Endothelial cell of umbilical vein (primary cell): ENCODE measurements at regions of chr17 and their contacts with region 1.

Region 1: GRCh38 chr17:77957857-77958715 is at the start of gene TNRC6C:
- DNase-seq: peak; percentile 98
- H3K4me3 ChIP-seq: peak within 1 kb of the TSS; percentile 65 to 81 (median 67)
- H3K27ac ChIP-seq: peak within 1 kb of the TSS; percentile 21
- H3K4me1 ChIP-seq: peaks cover 20% of the 10 kb centered on the region
- H3K27me3 ChIP-seq: peaks cover 26 to 29% of the 10 kb centered on the region in 2 experiments
- CTCF ChIP-seq: peak in 1 of 2 donors; percentile 33
- POLR2A ChIP-seq: peak; percentile 99
- total RNA-seq, gene TNRC6C: 17.5 and 20.4 TPM in 2 replicates

Region 2: GRCh38 chr17:77420804-77421629 is 537.1 kb before region 1 on chr17:
- CTCF ChIA-PET with region 1: no interaction called
- POLR2A ChIA-PET with region 1: no interaction called
- dilution Hi-C with region 1: no loop called
- intact Hi-C with region 1: no loop called
- DNase-seq: peak; percentile 42
- H3K4me3 ChIP-seq: no peak overlapping the region
- H3K27ac ChIP-seq: no peak overlapping the region
- H3K4me1 ChIP-seq: peaks cover 35% of the 10 kb centered on the region
- H3K27me3 ChIP-seq: no peaks in the 10 kb centered on the region
- CTCF ChIP-seq: no peak
- POLR2A ChIP-seq: no peak

Region 3: DNA sequence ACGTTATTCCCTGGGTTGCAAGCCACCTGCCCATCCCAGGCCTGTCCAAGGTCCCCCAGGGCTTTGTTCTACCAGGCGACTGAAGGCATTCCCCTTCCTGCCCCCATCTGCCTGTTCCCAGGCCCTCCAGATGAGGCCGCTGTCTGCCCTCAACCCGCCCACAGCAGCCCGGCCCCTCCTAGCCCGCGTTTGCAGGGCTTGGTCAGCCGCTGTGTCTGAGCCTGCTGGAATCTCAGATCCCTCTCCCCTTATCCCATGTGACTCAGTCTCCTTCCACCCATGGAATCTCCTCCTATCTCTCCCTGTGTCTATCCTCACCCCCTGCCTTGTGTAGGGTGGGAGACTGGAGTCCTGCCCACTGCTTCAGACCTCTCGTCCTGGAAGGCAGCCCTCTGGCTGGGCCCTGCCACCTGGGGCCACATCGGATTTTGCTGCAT is 185.6 kb before region 1 on chr17:
- CTCF ChIA-PET with region 1: no interaction called
- POLR2A ChIA-PET with region 1: no interaction called
- dilution Hi-C with region 1: no loop called
- intact Hi-C with region 1: loop called (anchors 5 kb)
- DNase-seq: peak; percentile 40
- H3K4me3 ChIP-seq: no peak overlapping the region
- H3K27ac ChIP-seq: no peak overlapping the region
- H3K4me1 ChIP-seq: no peaks in the 10 kb centered on the region
- H3K27me3 ChIP-seq: no peaks in the 10 kb centered on the region
- CTCF ChIP-seq: peak; percentile 54 to 86
- POLR2A ChIP-seq: no peak

Region 4: DNA sequence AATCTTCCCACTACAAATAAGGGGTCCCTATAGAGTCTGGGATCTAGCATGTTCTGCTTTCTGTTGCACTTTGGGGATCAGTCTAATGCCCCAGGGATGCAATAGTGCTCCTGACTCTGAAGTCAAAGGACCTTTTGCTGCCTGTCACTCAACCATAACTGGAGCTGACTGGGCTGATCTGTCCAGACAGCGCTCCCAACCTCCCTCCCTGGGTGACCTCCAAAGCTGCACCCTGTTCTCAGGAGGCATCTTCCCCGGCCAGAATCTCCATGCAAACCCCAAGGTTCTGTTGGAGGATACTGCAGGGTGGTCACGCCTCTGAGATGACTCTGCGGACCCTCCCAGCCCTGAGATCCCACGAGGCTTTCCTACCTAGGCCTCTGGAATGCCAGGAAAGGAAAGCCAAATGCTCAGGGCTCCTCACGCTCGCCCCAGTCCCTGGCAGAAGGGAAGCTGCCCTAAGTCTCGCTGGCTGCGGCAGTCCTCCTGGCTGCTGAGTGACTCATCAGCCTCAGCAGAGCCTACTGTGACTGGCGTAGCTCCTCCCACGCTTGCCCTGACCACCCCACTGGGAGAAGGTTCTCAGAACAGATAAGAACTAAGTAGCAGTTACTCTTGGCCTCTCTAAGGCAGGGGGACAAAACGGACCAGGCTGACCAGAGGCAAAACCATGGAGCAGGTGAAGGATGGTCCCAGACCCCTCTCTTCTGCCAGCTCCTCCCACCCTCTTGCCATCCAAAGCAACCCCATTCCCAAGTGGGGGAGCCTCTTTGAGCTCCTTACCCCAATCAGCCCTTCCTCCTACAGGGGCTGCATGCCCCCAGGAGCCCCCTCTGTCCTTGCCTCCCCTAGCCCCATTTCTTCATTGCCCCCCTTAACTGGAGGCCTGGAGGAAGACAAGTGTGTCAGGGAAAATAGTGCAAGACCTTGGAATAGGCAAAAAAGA is 123.6 kb before region 1 on chr17:
- CTCF ChIA-PET with region 1: interaction called, 3 read pairs
- POLR2A ChIA-PET with region 1: interaction called, 8 read pairs
- dilution Hi-C with region 1: no loop called
- intact Hi-C with region 1: loop called (anchors 2 kb)
- DNase-seq: peak; percentile 75
- H3K4me3 ChIP-seq: no peak overlapping the region
- H3K27ac ChIP-seq: no peak overlapping the region
- H3K4me1 ChIP-seq: peaks cover 31% of the 10 kb centered on the region
- H3K27me3 ChIP-seq: no peaks in the 10 kb centered on the region
- CTCF ChIP-seq: no peak
- POLR2A ChIP-seq: no peak

Region 5: DNA sequence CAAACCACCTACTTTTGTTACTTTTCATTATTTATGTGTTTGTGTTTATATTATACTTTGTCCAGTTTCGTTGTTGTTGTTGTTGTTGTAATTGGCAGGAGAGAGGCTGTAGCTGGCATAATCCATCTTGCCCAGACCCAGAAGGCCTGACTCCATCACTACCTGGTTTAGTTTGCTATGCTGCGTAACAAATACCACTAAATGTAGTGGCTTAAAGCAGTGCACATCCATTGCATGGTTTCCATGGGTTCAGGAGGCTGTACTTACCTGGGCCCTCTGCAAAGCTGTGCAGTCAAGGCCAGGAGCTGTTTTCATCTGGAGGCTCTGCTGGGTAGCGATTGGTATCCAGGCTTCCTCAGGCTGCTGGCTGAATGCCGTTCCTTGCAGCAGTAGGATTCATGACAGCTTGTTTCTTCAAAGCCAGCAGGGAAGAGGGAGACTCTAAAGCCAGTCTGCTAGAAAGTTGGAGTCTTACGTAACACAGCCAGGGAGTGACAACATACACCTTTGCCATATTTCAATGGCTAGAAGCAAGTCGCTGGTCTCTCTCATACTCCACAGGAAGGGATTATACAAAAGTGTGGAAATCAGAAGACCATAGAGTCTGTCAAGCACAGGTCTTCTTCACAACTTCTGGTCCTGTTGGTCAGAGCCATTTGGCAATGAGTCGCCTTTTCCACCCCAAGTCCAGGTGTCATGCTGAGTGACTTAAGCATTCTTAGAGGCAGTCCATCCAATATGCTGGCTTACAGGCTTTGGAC is 41.5 kb after region 1 on chr17:
- CTCF ChIA-PET with region 1: interaction called, 4 read pairs
- POLR2A ChIA-PET with region 1: interaction called, 25 read pairs
- dilution Hi-C with region 1: no loop called
- intact Hi-C with region 1: loop called (anchors 1 kb)
- DNase-seq: peak; percentile 66
- H3K4me3 ChIP-seq: no peak overlapping the region
- H3K27ac ChIP-seq: peak overlapping the region; percentile 79
- H3K4me1 ChIP-seq: peaks cover 39% of the 10 kb centered on the region
- H3K27me3 ChIP-seq: no peaks in the 10 kb centered on the region
- CTCF ChIP-seq: no peak
- POLR2A ChIP-seq: no peak

Region 6: DNA sequence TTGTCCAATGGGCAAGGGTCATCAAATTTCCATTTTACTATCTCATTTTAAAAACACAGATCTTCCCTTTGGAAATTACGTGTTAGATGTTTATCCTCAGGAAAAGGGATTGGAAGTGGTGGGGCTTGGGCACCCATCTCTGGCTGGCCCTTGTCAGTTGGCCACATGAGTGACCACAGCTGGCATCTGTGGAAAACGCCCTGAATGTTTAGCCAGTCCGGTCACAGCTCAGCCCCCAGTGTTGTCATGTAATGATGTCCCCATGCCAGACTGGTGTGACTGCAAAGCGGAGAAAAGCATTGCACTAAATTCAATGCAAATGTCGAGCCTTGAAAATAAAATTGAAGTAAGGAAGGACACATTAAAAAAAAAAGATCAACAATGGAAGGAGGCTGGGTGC is 117.5 kb after region 1 on chr17:
- CTCF ChIA-PET with region 1: no interaction called
- POLR2A ChIA-PET with region 1: no interaction called
- dilution Hi-C with region 1: no loop called
- intact Hi-C with region 1: no loop called
- DNase-seq: no peak
- H3K4me3 ChIP-seq: no peak overlapping the region
- H3K27ac ChIP-seq: no peak overlapping the region
- H3K4me1 ChIP-seq: no peaks in the 10 kb centered on the region
- H3K27me3 ChIP-seq: no peaks in the 10 kb centered on the region
- CTCF ChIP-seq: no peak
- POLR2A ChIP-seq: no peak

Region 7: DNA sequence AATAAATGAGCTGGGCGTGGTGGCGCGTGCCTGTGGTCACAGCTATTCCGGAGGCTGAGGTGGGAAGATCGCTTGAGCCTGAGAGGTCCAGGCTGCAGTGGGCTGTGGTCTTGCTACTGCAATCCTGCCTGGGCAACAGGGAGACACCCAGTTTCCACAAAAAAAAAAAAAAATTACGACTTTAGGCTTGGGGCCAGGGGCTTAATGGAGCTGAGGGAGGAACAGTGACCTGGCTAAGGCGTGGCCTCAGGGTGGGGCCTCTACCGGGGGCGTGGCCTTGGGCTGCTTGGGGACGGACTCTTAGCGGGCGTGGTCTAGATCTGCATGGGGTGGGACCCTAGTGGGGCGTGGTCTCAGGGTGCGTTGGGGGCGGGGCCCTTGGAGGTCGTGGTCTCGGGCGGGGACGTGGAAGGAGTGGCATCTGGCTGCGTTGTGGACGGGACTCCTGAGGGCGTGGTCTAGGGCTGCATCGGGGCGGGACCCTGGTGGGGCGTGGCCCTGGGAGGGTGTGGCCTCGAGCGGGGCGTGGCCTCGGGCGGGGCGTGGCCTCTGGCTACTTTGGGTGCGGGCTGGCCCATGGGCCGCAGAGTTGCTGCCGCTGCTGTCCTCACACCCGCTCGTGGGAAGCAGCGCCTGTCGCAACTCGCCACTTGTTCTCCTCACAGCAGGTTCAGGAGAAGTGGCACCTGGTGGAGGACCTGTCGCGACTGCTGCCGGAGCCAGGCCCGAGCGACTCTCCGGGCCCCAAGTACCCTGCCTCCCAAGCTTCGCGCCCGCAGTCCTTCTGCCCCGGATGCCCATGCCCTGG is 182.3 kb after region 1 on chr17:
- CTCF ChIA-PET with region 1: no interaction called
- POLR2A ChIA-PET with region 1: no interaction called
- dilution Hi-C with region 1: no loop called
- intact Hi-C with region 1: no loop called
- DNase-seq: peak; percentile 84
- H3K4me3 ChIP-seq: peak overlapping the region in 1 of 3 experiments; percentile 1
- H3K27ac ChIP-seq: no peak overlapping the region
- H3K4me1 ChIP-seq: peaks cover 22% of the 10 kb centered on the region
- H3K27me3 ChIP-seq: no peaks in the 10 kb centered on the region
- CTCF ChIP-seq: no peak
- POLR2A ChIP-seq: peak; percentile 51

Region 8: GRCh38 chr17:78933959-78934568 is 976.0 kb after region 1 on chr17:
- CTCF ChIA-PET with region 1: no interaction called
- POLR2A ChIA-PET with region 1: no interaction called
- dilution Hi-C with region 1: no loop called
- intact Hi-C with region 1: loop called (anchors 5 kb)
- DNase-seq: peak; percentile 96
- H3K4me3 ChIP-seq: peak overlapping the region in 2 of 3 experiments; percentile 16 to 25
- H3K27ac ChIP-seq: peak overlapping the region; percentile 93
- H3K4me1 ChIP-seq: peaks cover 30% of the 10 kb centered on the region
- H3K27me3 ChIP-seq: no peaks in the 10 kb centered on the region
- CTCF ChIP-seq: no peak
- POLR2A ChIP-seq: peak; percentile 55